ENCODE measurements at regions of chr1 and their contacts with region 1.

Region 1: GRCh38 chr1:77683160-77684148 is 996 bp upstream of the ZZZ3 start:
- DNase-seq: peak; percentile 91 to 94 (median 92)
- H3K4me3 ChIP-seq: peak overlapping the region; percentile 17 to 81
- H3K4me3 Mint-ChIP-seq: peak overlapping the region; percentile 85 to 95 (median 91)
- H3K27ac ChIP-seq: peak overlapping the region; percentile 88
- H3K27ac Mint-ChIP-seq: peak overlapping the region; percentile 93 to 98 (median 97)
- H3K4me1 ChIP-seq: peaks cover 45% of the 10 kb centered on the region
- H3K4me1 Mint-ChIP-seq: peaks cover 20 to 42% (median 31%) of the 10 kb centered on the region in 4 donors
- H3K27me3 ChIP-seq: no peaks in the 10 kb centered on the region
- H3K27me3 Mint-ChIP-seq: no peaks in the 10 kb centered on the region

Region 2: DNA sequence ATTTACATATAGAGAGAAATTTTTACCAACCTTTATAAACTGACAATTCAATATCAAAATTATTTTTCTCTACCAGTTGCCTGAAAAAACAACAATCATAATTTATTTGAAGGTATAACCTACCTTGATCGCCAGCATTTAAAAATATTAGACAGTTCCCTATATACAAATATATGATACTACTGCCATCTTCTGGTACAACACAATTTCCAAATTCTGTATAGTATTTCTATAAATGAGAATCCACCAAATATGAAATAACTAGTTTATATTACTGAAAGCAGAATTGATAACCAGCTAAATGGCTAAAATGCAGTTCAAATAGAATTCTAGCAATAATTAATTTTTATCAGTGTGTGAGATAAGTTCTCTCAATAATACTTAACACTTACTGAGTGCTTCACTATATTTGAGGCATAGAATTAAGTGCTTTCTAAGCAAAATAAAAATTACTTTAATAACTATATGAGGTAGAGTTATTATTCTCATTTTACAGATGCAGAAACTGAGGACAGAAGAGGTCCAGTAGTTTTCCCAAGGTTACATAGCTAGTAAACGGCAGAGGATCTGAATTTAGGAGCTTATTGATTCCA is 539.8 kb before region 1 on chr1:
- CTCF ChIA-PET with region 1: no interaction called
- POLR2A ChIA-PET with region 1: no interaction called
- intact Hi-C with region 1: loop called (anchors 2 kb)
- DNase-seq: peak in 3 of 5 donors; percentile 7 to 16 (median 8)
- H3K4me3 ChIP-seq: no peak overlapping the region
- H3K4me3 Mint-ChIP-seq: no peak overlapping the region
- H3K27ac ChIP-seq: no peak overlapping the region
- H3K27ac Mint-ChIP-seq: no peak overlapping the region
- H3K4me1 ChIP-seq: peaks cover 4% of the 10 kb centered on the region
- H3K4me1 Mint-ChIP-seq: peaks cover 3 to 6% (median 4%) of the 10 kb centered on the region in 4 donors
- H3K27me3 ChIP-seq: no peaks in the 10 kb centered on the region
- H3K27me3 Mint-ChIP-seq: no peaks in the 10 kb centered on the region

Region 3: GRCh38 chr1:77370583-77371306 is 312.7 kb before region 1 on chr1:
- CTCF ChIA-PET with region 1: no interaction called
- POLR2A ChIA-PET with region 1: no interaction called
- intact Hi-C with region 1: no loop called
- DNase-seq: no peak
- H3K4me3 ChIP-seq: no peak overlapping the region
- H3K4me3 Mint-ChIP-seq: no peak overlapping the region
- H3K27ac ChIP-seq: no peak overlapping the region
- H3K27ac Mint-ChIP-seq: no peak overlapping the region
- H3K4me1 ChIP-seq: peaks cover 10% of the 10 kb centered on the region
- H3K4me1 Mint-ChIP-seq: peaks cover 10 to 35% (median 15%) of the 10 kb centered on the region in 4 donors
- H3K27me3 ChIP-seq: no peaks in the 10 kb centered on the region
- H3K27me3 Mint-ChIP-seq: no peaks in the 10 kb centered on the region

Region 4: DNA sequence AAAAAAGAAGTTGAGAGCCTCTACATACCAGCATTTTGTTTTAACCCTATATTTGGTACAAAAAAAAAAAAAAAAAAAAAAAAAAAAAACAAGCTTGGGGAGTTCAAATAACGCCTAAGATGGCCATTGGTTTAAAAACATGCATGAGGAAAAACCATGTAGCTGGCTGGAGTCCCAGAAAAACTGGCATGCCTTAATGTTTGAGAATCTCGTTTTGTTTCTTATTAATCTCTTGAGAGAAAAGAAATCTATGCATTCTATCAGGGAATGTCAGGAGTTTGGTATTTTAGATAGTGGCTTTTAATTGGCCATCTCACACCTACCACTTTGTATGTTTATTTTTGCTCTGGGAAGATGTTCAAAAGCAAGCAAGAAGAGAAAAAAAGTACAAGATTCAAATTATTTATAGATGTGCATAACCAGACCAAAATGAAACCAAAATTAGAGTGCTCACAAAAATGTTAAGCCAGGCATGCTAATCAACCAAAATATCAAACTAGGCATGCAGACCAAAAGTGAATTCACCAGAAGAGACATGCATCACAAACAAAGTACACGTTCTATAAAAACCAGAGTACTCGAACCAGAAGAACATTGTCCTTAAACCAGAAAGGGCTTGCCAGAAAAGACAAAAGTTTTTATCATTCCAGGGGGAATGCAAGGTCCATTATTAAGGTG is 245.1 kb before region 1 on chr1:
- CTCF ChIA-PET with region 1: no interaction called
- POLR2A ChIA-PET with region 1: interaction called, 3 read pairs
- intact Hi-C with region 1: loop called (anchors 10 kb)
- DNase-seq: no peak
- H3K4me3 ChIP-seq: no peak overlapping the region
- H3K4me3 Mint-ChIP-seq: peak overlapping the region; percentile 33 to 80 (median 76)
- H3K27ac ChIP-seq: no peak overlapping the region
- H3K27ac Mint-ChIP-seq: peak overlapping the region in 6 of 7 donors; percentile 80 to 91 (median 84)
- H3K4me1 ChIP-seq: peaks cover 31% of the 10 kb centered on the region
- H3K4me1 Mint-ChIP-seq: peaks cover 22 to 33% (median 26%) of the 10 kb centered on the region in 4 donors
- H3K27me3 ChIP-seq: no peaks in the 10 kb centered on the region
- H3K27me3 Mint-ChIP-seq: no peaks in the 10 kb centered on the region

Region 5: GRCh38 chr1:77476475-77476874 is 207.0 kb before region 1 on chr1:
- CTCF ChIA-PET with region 1: no interaction called
- POLR2A ChIA-PET with region 1: no interaction called
- intact Hi-C with region 1: no loop called
- DNase-seq: no peak
- H3K4me3 ChIP-seq: no peak overlapping the region
- H3K4me3 Mint-ChIP-seq: no peak overlapping the region
- H3K27ac ChIP-seq: no peak overlapping the region
- H3K27ac Mint-ChIP-seq: no peak overlapping the region
- H3K4me1 ChIP-seq: no peaks in the 10 kb centered on the region
- H3K4me1 Mint-ChIP-seq: peaks cover 0 to 6% (median 3%) of the 10 kb centered on the region in 4 donors
- H3K27me3 ChIP-seq: no peaks in the 10 kb centered on the region
- H3K27me3 Mint-ChIP-seq: peaks cover 0 to 3% of the 10 kb centered on the region in 2 donors

Region 6: GRCh38 chr1:77668924-77669449 is 14.5 kb before region 1 on chr1:
- CTCF ChIA-PET with region 1: interaction called, 3 read pairs
- POLR2A ChIA-PET with region 1: interaction called, 13 read pairs
- intact Hi-C with region 1: no loop called
- DNase-seq: no peak
- H3K4me3 ChIP-seq: no peak overlapping the region
- H3K4me3 Mint-ChIP-seq: peak overlapping the region in 3 of 8 donors; percentile 23 to 59 (median 32)
- H3K27ac ChIP-seq: no peak overlapping the region
- H3K27ac Mint-ChIP-seq: no peak overlapping the region
- H3K4me1 ChIP-seq: peaks cover 62% of the 10 kb centered on the region
- H3K4me1 Mint-ChIP-seq: peaks cover 39 to 82% (median 61%) of the 10 kb centered on the region in 4 donors
- H3K27me3 ChIP-seq: no peaks in the 10 kb centered on the region
- H3K27me3 Mint-ChIP-seq: no peaks in the 10 kb centered on the region

Region 7: GRCh38 chr1:77832901-77833300 is 149.4 kb after region 1 on chr1:
- CTCF ChIA-PET with region 1: no interaction called
- POLR2A ChIA-PET with region 1: no interaction called
- intact Hi-C with region 1: no loop called
- DNase-seq: no peak
- H3K4me3 ChIP-seq: no peak overlapping the region
- H3K4me3 Mint-ChIP-seq: no peak overlapping the region
- H3K27ac ChIP-seq: no peak overlapping the region
- H3K27ac Mint-ChIP-seq: no peak overlapping the region
- H3K4me1 ChIP-seq: no peaks in the 10 kb centered on the region
- H3K4me1 Mint-ChIP-seq: peaks cover 0 to 2% (median under 1%) of the 10 kb centered on the region in 4 donors
- H3K27me3 ChIP-seq: no peaks in the 10 kb centered on the region
- H3K27me3 Mint-ChIP-seq: no peaks in the 10 kb centered on the region

Region 8: GRCh38 chr1:77978969-77979876 is 295.8 kb after region 1 on chr1 and contains the start of gene FUBP1:
- CTCF ChIA-PET with region 1: no interaction called
- POLR2A ChIA-PET with region 1: interaction called, 29 read pairs
- intact Hi-C with region 1: loop called (anchors 1 kb)
- DNase-seq: peak; percentile 95 to 98 (median 97)
- H3K4me3 ChIP-seq: peak within 1 kb of the TSS; percentile 74 to 94
- H3K4me3 Mint-ChIP-seq: no peak within 1 kb of the TSS
- H3K27ac ChIP-seq: peak within 1 kb of the TSS; percentile 100
- H3K27ac Mint-ChIP-seq: no peak within 1 kb of the TSS
- H3K4me1 ChIP-seq: peaks cover 55% of the 10 kb centered on the region
- H3K4me1 Mint-ChIP-seq: peaks cover 22 to 39% (median 30%) of the 10 kb centered on the region in 4 donors
- H3K27me3 ChIP-seq: no peaks in the 10 kb centered on the region
- H3K27me3 Mint-ChIP-seq: no peaks in the 10 kb centered on the region
- total RNA-seq, gene FUBP1: 246 to 270 TPM

Measured in CD4-positive, alpha-beta memory T cell (primary cell).